Activated B cell treated with CpG ODN at 0.5 μM for 24 hours (primary cell): ENCODE measurements at regions of chr9 and their contacts with region 1.

Region 1: DNA sequence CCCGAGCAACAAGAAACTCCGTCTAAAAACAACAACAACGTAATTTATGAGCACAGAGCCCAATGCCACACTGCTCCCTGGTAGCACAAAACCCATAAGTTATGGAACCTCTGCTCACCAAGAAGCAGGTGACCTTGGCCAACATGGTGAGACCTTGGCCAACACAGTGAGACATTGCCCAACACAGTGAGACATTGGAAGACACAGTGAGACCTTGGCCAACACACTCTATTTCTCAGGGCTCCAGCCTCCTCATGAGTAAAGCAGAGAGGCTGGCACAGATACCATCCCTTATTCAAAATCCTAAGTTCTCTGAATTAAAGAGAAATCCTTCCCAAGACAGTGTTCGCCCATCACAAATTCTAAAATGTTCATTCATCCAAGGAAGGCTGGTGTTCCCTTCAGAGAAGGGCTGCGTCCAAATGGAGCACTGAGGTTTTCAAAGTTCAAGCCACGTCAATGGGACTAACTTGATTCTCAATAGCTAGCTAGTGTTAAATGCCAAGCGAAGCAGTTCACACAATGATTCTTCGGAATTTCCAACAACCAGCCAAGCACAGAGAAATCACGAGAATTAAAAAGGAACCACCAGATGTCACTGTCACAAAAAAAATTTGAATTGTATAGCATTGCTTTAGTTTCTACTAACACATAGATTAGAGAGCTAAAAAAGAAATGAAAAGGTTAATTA is 29.5 kb downstream of the TTC39B start:
- DNase-seq: no peak
- ATAC-seq: peak; percentile 60
- H3K4me3 Mint-ChIP-seq: no peak overlapping the region
- H3K27ac Mint-ChIP-seq: no peak overlapping the region
- H3K4me1 Mint-ChIP-seq: peaks cover 4% of the 10 kb centered on the region
- H3K27me3 Mint-ChIP-seq: no peaks in the 10 kb centered on the region
- CTCF ChIP-seq: no peak

Region 2: DNA sequence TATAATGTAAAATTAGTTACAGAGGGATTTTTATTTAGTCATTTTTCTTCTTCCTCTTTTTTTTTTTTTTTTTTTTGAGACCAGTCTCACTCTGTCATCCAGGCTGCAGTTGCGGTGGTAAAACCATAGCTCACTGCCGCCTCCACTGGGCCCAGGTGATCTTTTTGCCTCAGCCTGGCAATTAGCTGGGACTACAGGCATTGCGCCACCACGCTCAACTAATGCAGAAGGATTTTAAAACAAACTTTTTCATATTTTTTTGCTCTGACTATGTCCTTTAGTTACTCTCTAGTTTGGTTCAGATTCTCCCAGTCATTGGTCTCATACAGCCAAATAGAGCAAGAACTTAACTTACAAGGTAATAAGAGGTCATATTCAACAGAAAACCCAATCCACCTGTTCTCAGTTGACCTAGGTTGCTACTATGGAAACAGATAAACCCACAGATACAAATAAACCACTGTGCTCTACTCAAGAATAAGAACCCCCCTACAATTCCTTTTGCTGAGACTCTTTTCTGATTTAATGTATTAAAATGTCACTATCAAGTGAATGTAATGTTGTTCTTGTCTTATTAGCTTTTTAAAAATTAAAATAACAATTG is 79.6 kb after region 1 on chr9:
- CTCF ChIA-PET with region 1: interaction called, 6 read pairs
- POLR2A ChIA-PET with region 1: no interaction called
- intact Hi-C with region 1: loop called (anchors 1 kb)
- DNase-seq: no peak
- ATAC-seq: peak; percentile 87
- H3K4me3 Mint-ChIP-seq: no peak overlapping the region
- H3K27ac Mint-ChIP-seq: no peak overlapping the region
- H3K4me1 Mint-ChIP-seq: peaks cover 6% of the 10 kb centered on the region
- H3K27me3 Mint-ChIP-seq: no peaks in the 10 kb centered on the region
- CTCF ChIP-seq: no peak

Region 3: GRCh38 chr9:15416880-15417279 is 139.3 kb after region 1 on chr9:
- CTCF ChIA-PET with region 1: interaction called, 10 read pairs
- POLR2A ChIA-PET with region 1: no interaction called
- intact Hi-C with region 1: loop called (anchors 1 kb)
- DNase-seq: no peak
- ATAC-seq: peak; percentile 40
- H3K4me3 Mint-ChIP-seq: no peak overlapping the region
- H3K27ac Mint-ChIP-seq: no peak overlapping the region
- H3K4me1 Mint-ChIP-seq: no peaks in the 10 kb centered on the region
- H3K27me3 Mint-ChIP-seq: peaks cover 9% of the 10 kb centered on the region
- CTCF ChIP-seq: no peak

Region 4: DNA sequence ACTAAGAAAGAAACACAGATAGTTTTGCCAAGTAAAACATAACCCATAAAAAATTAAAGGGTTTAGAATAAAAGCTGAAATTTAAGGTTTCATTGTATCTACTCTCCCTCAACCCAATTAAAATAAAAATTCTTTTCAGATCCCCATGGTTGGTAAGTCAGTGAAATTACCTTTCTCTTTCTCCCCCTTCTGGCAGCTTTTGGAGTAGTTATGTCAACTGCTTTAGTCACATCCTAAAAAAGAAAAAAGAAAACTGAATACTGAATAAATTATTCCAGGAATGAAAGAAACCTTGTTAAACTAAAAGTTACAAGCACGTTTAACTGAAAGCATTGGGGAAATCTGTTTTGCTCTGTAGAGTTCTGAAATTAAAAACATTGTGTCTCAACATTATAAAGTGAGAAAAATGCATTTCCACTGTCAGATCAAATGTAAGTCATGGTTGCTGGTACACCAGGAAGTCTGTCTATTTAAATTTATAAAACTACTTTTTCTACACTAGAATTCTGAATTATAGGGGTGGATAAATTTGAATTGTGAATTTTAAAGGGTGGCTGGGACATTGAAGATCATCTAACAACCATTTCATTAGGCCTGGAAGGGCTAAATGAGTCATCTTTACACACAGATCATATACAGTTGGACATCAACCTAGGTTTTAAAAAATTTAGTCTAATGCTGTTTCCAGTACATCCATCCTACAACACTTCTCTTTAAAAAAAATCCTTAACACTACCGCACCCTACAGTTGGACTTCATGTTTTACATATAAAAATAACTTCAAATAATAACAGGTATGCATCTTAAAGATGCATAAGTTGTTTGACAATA is 208.5 kb after region 1 on chr9:
- CTCF ChIA-PET with region 1: no interaction called
- POLR2A ChIA-PET with region 1: no interaction called
- intact Hi-C with region 1: loop called (anchors 1 kb)
- DNase-seq: no peak
- ATAC-seq: no peak
- H3K4me3 Mint-ChIP-seq: no peak overlapping the region
- H3K27ac Mint-ChIP-seq: no peak overlapping the region
- H3K4me1 Mint-ChIP-seq: peaks cover 18% of the 10 kb centered on the region
- H3K27me3 Mint-ChIP-seq: no peaks in the 10 kb centered on the region
- CTCF ChIP-seq: no peak

Region 5: DNA sequence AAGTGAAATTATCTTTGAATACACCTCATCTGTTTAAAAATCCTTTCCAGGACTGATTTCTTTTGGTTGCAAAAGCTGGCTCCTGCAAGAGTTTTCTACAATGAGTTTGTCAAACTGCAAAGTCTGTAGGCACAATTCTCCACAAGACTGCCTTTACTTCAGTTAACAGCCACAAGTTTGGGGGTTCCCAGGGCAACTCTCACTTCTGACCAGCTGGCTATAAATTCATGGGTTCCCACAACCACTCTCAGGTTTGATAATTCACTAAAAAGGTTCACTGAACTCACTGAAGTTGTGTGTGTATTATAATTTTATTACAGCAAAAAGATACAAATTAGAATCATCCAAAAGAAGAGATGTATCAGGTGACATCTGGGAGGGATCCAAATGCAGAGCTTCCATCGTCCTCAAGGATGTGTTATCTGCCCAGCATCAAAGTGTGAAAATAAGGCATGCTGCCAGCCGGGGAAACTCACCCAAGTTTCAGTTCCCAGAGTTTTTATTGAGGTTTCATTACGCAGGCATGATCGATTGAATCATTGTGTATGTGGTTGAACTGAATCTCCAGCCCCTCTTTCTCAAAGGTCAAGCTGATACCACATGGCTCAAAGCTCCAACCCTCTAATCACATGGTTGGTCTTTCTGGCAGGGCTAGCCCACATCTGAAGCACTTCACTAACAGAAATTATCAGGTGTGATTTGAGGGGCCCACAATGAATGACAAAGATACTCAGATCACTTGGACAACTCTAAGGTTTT is 252.2 kb after region 1 on chr9:
- CTCF ChIA-PET with region 1: no interaction called
- POLR2A ChIA-PET with region 1: no interaction called
- intact Hi-C with region 1: loop called (anchors 1 kb)
- DNase-seq: no peak
- ATAC-seq: no peak
- H3K4me3 Mint-ChIP-seq: no peak overlapping the region
- H3K27ac Mint-ChIP-seq: peak overlapping the region; percentile 46
- H3K4me1 Mint-ChIP-seq: peaks cover 10% of the 10 kb centered on the region
- H3K27me3 Mint-ChIP-seq: peaks cover 4% of the 10 kb centered on the region
- CTCF ChIP-seq: no peak